Ascending aorta (tissue), 2 donors: ENCODE measurements at regions of chr12 and their contacts with region 1.

Region 1: DNA sequence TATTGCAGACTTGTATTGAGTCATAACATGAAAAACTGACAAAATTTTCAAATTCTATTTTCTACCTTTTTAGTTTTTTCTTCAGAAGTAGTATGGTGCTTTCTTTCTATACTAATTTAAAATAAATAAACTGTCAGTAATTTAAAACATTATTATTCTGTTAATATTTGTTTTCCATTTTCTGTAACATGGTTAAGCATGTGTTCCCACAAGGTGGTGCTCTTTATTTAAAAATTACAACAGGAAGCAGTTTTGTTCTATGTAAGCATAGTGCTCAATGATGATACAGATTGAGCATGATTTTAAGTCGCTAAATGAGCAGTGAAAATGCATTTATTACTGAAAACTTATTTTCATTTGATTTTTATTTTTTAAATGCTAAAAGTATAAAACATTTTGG is 114.6 kb downstream of the PPFIA2 start:
- DNase-seq: no peak
- H3K4me3 ChIP-seq: no peak overlapping the region
- H3K27ac ChIP-seq: no peak overlapping the region
- H3K4me1 ChIP-seq: no peaks in the 10 kb centered on the region
- H3K27me3 ChIP-seq: no peaks in the 10 kb centered on the region
- CTCF ChIP-seq: peak; percentile 39 to 65 (median 54)

Region 2: GRCh38 chr12:81229758-81230157 is 414.7 kb before region 1 on chr12:
- intact Hi-C with region 1: no loop called
- DNase-seq: no peak
- H3K4me3 ChIP-seq: no peak overlapping the region
- H3K27ac ChIP-seq: no peak overlapping the region
- H3K4me1 ChIP-seq: no peaks in the 10 kb centered on the region
- H3K27me3 ChIP-seq: no peaks in the 10 kb centered on the region
- CTCF ChIP-seq: no peak

Region 3: GRCh38 chr12:81692008-81692407 is 47.5 kb after region 1 on chr12:
- intact Hi-C with region 1: no loop called
- DNase-seq: no peak
- H3K4me3 ChIP-seq: no peak overlapping the region
- H3K27ac ChIP-seq: no peak overlapping the region
- H3K4me1 ChIP-seq: no peaks in the 10 kb centered on the region
- H3K27me3 ChIP-seq: no peaks in the 10 kb centered on the region
- CTCF ChIP-seq: no peak

Region 4: DNA sequence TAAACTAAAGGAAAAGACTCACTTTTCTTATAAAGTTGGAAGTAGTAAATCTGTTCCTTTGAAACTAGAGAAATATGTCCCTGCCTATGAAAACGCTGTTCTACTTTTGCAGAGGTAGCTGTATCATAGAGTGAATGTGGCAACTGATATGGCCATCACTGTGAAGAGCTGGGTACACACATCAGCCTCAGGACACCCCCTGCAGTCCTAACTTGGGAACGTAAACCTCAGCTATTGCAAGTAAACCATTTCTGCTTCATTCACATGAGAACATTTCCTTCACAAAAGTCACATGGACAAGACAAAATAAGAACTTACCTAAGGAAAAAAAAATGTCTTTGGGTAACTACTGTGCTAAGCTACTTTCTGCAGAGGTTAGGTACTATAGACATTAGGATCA is 348.0 kb after region 1 on chr12:
- intact Hi-C with region 1: loop called (anchors 1 kb)
- DNase-seq: no peak
- H3K4me3 ChIP-seq: no peak overlapping the region
- H3K27ac ChIP-seq: no peak overlapping the region
- H3K4me1 ChIP-seq: no peaks in the 10 kb centered on the region
- H3K27me3 ChIP-seq: no peaks in the 10 kb centered on the region
- CTCF ChIP-seq: peak; percentile 30 to 43 (median 34)

Region 5: DNA sequence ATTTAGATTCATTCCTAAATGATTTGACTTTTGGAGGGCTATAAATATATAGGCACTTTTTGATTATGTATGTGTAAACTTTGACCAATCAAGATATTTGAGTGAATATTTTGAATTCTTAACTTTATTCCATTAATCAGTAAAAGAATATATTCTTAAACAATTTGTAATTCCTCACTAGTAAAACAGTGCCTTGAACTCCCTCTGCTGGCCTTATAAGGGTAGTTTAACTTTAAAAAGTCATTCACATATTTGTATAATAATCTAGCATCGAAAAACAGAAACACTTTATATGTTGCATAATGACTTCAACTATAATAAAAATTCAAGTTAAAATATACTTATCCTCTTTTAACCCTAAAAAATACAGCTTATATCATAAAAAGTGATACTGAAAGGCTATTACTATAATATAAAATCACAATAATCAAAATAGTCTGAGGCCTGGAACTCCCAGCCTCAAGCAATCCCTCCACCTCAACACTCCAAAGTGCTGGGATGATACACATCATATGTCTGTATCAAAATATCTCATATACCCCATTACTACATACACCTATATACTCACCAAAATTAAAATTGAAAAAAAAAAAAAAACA is 682.5 kb after region 1 on chr12:
- intact Hi-C with region 1: loop called (anchors 5 kb)
- DNase-seq: no peak
- H3K4me3 ChIP-seq: no peak overlapping the region
- H3K27ac ChIP-seq: no peak overlapping the region
- H3K4me1 ChIP-seq: peaks cover 0 to 2% of the 10 kb centered on the region in 2 donors
- H3K27me3 ChIP-seq: no peaks in the 10 kb centered on the region
- CTCF ChIP-seq: peak in 2 of 3 experiments; percentile 36 to 44